K562 (cell line): ENCODE measurements at regions of chr16 and their contacts with region 1.

Region 1: DNA sequence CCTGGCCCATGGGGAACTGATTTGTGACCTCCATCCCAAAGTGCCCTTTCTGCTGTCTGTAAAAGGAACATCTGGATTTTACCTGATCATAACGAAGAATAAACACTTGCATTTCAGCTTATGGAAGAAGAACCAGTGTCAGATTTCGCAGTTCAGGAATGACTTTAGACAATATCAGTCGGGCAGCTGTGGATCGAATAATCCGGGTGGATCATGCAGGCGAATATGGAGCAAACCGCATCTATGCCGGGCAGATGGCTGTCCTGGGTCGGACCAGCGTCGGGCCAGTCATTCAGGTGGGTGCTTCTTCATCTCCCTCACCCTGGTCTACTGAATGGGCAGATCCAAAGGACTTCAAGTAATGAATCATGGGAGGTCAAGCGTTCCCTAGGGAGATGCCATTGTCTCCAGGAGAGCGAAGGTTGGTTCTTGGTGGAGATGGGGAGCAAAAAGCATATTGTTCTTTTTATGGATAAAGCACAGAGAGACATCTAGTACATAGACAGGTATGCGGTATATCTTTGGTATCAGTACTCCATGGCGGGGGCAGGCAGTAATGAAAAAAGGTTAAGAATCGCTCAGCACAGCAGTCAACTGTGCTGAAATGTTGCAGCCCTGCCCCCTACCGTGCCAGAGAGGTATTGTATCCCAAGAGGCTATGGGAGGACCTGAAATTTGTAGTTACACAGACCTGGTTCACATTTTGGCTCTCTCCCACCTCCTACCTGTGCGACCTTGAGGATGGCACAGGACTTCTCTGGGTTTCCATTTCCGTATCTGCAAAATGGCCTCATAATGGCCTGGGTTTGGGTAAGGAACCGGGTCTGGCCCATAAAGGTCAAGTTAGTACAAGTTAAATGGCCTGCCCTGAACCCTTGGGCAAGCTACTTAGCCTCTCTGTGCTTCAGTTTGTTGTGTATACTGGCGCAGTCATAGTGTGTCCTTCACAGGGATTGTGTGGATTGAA is 4.7 kb downstream of the COQ7 start:
- DNase-seq: peak; percentile 43 to 75 (median 46)
- ATAC-seq: peak; percentile 72
- H3K4me3 ChIP-seq: no peak overlapping the region
- H3K27ac ChIP-seq: no peak overlapping the region
- H3K4me1 ChIP-seq: peaks cover 0 to 3% of the 10 kb centered on the region in 2 experiments; a peak in 1 of 5 replicates
- H3K27me3 ChIP-seq: no peaks in the 10 kb centered on the region
- CTCF ChIP-seq: peak; percentile 78 to 87 (median 83)
- EP300 ChIP-seq: no peak
- POLR2A ChIP-seq: no peak
- RAD21 ChIP-seq: peak; percentile 43 to 80

Region 2: DNA sequence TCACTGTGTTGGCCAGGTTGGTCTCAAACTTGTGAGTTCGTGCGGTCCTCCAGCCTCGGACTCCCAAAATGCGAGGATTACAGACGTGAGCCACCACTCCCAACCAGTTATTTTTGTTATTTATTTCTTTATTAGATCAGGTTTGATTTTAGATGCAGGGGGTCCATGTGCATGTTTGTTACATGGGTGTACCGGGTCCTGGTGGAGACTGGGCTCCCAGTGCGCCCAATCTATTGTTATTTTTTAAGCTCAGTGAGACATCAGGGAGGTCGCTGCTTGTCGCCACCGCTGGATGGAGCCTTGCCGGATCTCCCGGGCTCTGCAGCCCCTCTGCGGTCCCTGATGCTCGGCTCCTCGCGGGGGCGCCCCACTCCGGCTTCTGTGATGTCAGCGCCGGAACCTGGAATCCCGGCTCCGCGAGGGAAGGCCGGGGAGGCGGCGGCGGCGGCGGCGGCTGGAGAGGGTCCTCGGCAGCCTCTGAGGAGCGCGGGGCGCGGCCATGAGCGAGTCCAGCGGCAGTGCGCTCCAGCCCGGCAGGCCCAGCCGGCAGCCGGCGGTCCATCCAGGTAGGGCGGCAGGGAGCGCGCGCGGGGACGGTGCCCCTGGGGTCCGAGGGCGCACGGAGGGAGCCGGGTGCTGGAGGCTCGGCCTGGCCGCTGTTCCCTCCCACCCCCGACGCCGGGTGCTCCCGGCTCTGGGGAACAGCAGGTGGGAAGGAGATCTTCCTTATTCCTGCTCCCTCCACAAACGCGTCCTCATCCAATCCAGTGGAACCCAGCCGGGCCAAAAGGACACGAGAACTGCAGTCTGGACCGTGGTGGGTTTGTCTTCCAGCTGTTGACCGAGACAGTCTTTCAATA is 88.3 kb before region 1 on chr16 and contains the start of gene TMC7:
- CTCF ChIA-PET with region 1: interaction called, 13 read pairs
- POLR2A ChIA-PET with region 1: interaction called, 4 read pairs
- in situ Hi-C with region 1: loop called (anchors 5 kb)
- intact Hi-C with region 1: loop called (anchors 2 kb)
- DNase-seq: peak; percentile 87 to 92 (median 90)
- ATAC-seq: peak; percentile 100
- H3K4me3 ChIP-seq: peak within 1 kb of the TSS; percentile 73
- H3K27ac ChIP-seq: 0 out of 3 replicates have a peak within 1 kb of the TSS, but pooled peaks have one; percentile 23
- H3K4me1 ChIP-seq: peaks cover 0 to 7% of the 10 kb centered on the region in 2 experiments; a peak in 3 of 5 replicates
- H3K27me3 ChIP-seq: no peaks in the 10 kb centered on the region; a peak in 3 of 5 replicates
- CTCF ChIP-seq: peak; percentile 89 to 99 (median 99)
- EP300 ChIP-seq: 0 out of 2 replicates have a peak, but pooled peaks have one; percentile 21
- POLR2A ChIP-seq: no peak; the same call in 1 of the 2 replicates
- RAD21 ChIP-seq: peak; percentile 80 to 92
- polyA plus RNA-seq, gene TMC7: 0.08 to 0.32 TPM

Region 3: DNA sequence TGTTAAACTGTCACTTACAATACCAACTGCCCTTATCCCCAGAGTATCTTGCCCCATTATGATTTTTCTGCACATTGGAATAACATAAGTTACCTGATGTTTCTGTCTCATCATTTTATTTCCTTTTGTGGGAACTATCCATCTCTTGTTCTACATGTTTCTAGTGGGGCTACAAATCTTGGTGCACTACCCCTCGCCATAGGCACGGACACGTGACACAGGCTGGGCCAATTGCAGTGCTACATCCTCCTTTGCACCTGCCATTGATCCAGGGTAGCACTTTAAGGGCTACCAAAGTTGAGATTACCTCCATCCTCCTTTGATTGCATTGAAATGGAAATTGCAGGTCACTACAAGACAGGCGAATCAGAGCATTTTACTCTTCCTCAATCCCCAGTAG is 81.8 kb after region 1 on chr16:
- CTCF ChIA-PET with region 1: no interaction called
- POLR2A ChIA-PET with region 1: no interaction called
- in situ Hi-C with region 1: no loop called
- intact Hi-C with region 1: no loop called
- DNase-seq: peak; percentile 41 to 70 (median 44)
- ATAC-seq: peak; percentile 48; the same call in 1 of the 3 replicates
- H3K4me3 ChIP-seq: no peak overlapping the region
- H3K27ac ChIP-seq: no peak overlapping the region
- H3K4me1 ChIP-seq: no peaks in the 10 kb centered on the region
- H3K27me3 ChIP-seq: peaks cover 0 to 10% of the 10 kb centered on the region in 2 experiments; a peak in 2 of 5 replicates
- CTCF ChIP-seq: no peak
- EP300 ChIP-seq: 0 out of 2 replicates have a peak, but pooled peaks have one; percentile 9
- POLR2A ChIP-seq: no peak
- RAD21 ChIP-seq: no peak